ENCODE measurements at regions of chr11 and their contacts with region 1.

Region 1: GRCh38 chr11:6655020-6655789 is 404 bp downstream of the DCHS1 start:
- DNase-seq: peak in 1 of 2 donors; percentile 81
- H3K4me3 ChIP-seq: peak overlapping the region; percentile 53 to 75
- H3K27ac ChIP-seq: peak overlapping the region; percentile 83 to 91
- H3K4me1 ChIP-seq: peaks cover 0 to 14% of the 10 kb centered on the region in 2 donors
- H3K27me3 ChIP-seq: no peaks in the 10 kb centered on the region
- CTCF ChIP-seq: no peak

Region 2: DNA sequence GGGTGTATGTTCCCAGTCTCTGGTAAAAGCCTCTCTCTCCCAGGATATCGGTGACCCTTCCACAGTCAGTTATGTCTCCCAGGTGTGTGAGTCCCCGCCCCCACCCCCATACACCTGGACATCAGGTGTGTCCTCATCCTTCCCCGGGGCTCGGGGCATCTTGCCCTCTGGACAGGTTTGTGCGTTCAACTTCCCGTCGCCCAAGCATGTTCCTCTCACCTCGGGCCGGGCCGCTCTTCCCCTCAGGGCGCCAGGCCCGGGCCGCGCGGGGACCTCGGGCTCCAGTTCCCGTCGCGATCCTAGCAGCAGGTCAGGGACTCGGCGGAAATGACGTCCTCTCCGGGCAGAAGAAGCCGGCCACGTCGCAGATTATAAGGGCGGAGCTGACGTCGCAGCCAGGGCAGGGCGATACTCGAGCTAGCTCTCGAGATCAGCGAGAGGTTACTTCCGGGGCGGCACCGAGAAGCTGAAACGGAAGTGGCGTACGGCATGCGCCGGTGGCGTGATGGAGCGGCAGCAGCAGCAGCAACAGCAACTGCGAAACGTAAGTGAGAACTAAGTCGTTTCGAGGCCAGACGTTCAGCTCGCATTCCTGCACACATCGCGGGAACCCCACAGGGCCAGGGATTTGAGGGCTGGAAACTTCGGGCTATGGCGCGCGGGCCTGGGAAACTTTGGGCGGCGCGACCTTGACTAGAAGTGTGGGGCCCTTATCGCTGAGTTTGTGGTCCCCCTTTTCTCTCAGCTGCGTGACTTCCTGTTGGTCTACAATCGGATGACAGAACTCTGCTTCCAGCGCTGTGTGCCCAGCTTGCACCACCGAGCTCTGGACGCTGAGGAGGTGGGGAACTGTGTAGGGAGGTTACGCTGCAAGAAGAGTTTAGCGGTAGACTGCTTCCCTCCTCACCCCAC is 173.9 kb before region 1 on chr11 and contains the starts of genes ARFIP2 and TIMM10B:
- intact Hi-C with region 1: loop called (anchors 1 kb)
- DNase-seq: peak; percentile 96 to 99
- H3K4me3 ChIP-seq: peak within 1 kb of the TSS; percentile 92 to 94
- H3K27ac ChIP-seq: peak within 1 kb of the TSS; percentile 95
- H3K4me1 ChIP-seq: peaks cover 7 to 27% of the 10 kb centered on the region in 2 donors
- H3K27me3 ChIP-seq: no peaks in the 10 kb centered on the region
- CTCF ChIP-seq: no peak
- total RNA-seq, gene ARFIP2: 87.8 TPM
- total RNA-seq, gene TIMM10B: 19.2 TPM

Region 3: DNA sequence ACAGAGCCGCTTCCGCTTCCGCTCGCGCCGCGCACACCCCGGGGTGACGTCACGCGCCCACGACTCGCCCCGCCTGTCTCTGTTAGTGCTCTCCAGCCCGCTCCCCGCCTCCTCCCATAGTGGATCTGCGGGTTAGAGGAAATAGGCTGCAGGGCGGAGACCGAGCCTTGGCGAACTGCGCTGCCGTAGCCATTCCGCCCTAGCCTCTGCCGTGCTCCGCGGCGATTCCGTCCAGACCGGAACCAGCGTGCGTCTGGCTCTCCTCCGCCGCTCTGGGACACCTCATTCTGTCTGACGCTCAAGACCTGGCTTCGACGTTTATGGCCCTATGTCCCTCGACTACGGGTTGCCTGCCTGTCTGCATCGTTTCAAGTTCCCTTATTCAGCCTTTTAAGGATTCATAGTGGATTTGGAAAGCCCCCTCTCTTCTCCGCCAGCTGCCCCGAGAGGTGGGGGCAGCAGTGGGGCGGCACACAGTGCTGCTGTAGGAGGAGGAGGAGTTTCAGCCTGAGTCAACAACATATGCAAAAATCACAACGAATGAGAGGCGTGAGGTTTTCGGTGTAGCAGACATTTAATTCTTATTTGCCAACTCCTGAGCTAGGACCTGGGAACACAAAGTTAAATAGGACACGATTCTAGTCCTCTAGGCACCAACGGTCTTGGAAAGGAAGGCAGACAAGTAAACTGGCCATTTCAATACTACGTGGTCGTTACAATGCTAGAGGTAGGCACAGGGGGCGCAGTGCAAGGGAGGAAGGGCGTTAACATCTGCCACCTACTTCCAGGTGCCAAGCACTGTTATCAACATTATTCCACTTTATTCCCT is 42.8 kb before region 1 on chr11 and contains the start of gene TAF10:
- intact Hi-C with region 1: loop called (anchors 2 kb)
- DNase-seq: peak; percentile 95 to 99
- H3K4me3 ChIP-seq: peak within 1 kb of the TSS; percentile 76 to 95
- H3K27ac ChIP-seq: peak within 1 kb of the TSS; percentile 95 to 97
- H3K4me1 ChIP-seq: peaks cover 18 to 37% of the 10 kb centered on the region in 2 donors
- H3K27me3 ChIP-seq: no peaks in the 10 kb centered on the region
- CTCF ChIP-seq: peak in 2 of 3 experiments; percentile 43 to 47
- total RNA-seq, gene TAF10: 76.0 TPM

Measured in ascending aorta (tissue), 2 donors.